Activated naive CD8-positive, alpha-beta T cell treated with anti-CD3 and anti-CD28 coated beads, Interleukin-2, amount 10 ng/mL, durations not matched to agents 7 days and 5 days (primary cell): ENCODE measurements at regions of chr2 and their contacts with region 1.

Region 1: GRCh38 chr2:174492963-174493431 is 6.2 kb upstream of the GPR155 start:
- DNase-seq: peak; percentile 64
- ATAC-seq: peak; percentile 81
- H3K4me3 Mint-ChIP-seq: peak overlapping the region; percentile 88
- H3K27ac Mint-ChIP-seq: peak overlapping the region; percentile 98
- H3K4me1 Mint-ChIP-seq: peaks cover 59% of the 10 kb centered on the region
- H3K27me3 Mint-ChIP-seq: no peaks in the 10 kb centered on the region

Region 2: GRCh38 chr2:174503161-174503809 is 10.3 kb after region 1 on chr2:
- POLR2A ChIA-PET with region 1: interaction called, 14 read pairs
- DNase-seq: no peak
- ATAC-seq: no peak
- H3K4me3 Mint-ChIP-seq: no peak overlapping the region
- H3K27ac Mint-ChIP-seq: peak overlapping the region; percentile 3
- H3K4me1 Mint-ChIP-seq: peaks cover 11% of the 10 kb centered on the region
- H3K27me3 Mint-ChIP-seq: no peaks in the 10 kb centered on the region